ENCODE measurements at regions of chr13 and their contacts with region 1.

Region 1: GRCh38 chr13:45194081-45194939 is 6.5 kb downstream of the KCTD4 start:
- DNase-seq: peak in 1 of 2 donors; percentile 19
- ATAC-seq: peak; percentile 58

Region 2: DNA sequence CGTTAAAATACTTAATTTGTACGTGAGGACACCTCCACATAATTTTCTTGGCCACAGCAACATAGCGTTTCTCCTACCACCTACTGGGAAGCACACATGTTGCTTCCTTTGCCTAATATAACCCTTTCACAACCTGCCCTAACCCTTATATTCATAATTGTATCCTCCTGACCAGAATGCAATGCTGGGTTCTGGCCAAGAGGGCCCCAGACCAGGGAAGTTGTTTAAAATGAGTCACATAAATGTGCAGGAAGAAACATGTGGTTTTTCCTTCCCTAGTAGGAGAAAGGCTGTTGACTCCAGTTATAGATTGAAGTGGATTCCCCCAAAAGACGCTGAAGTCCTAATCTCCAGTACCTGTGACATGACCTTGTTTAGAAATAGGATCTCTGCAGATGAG is 392.3 kb before region 1 on chr13:
- intact Hi-C with region 1: no loop called
- DNase-seq: no peak
- ATAC-seq: peak; percentile 27

Region 3: DNA sequence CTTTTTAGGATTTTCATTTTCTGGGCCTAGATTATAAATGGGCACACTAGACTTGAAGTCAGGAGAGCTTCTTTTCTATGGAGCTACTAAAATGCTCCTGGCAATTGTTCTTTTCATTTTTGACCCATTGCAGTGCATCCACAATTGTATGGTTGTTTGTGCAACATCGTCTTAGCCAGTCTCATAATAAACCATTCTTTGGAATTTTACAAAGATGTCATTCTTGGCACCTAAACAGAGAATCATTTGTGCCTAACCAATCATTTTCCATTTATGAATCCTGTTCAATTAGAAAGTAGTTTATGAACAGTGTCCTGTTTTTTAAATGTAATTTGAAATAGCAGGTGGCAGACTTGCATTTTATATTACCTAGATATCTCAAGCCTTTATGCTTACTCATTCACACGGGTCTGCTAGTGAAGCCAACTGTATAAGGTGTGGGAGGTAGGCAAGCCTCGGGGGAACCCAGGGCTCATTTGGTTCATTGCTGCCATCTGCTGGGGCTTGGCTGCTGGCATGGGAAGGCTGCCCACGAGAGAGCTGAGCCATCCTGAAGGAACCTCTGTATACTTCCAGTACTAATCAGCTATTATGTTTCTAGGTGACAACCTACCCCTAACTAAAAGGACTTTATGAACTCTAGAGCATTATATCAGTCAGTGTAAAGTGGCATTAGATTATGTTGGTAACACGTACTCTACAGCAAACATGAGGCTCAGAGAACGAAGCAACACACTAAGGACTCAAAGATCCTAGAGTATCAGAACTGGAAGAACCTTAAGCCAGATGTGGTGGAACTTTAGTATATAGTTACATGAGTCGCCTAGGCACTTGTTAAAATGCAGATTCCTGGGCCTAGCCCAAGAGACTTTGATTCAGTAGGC is 86.7 kb after region 1 on chr13:
- intact Hi-C with region 1: loop called in 1 of 2 experiments (anchors 10 kb)
- DNase-seq: peak; percentile 65 to 82
- ATAC-seq: peak; percentile 100

Measured in left colon (tissue), 2 donors.